Heart right ventricle (tissue), 16 donors: ENCODE measurements at regions of chr11 and their contacts with region 1.

Region 1: GRCh38 chr11:114059278-114059983 is at the start of gene ZBTB16:
- DNase-seq: peak; percentile 88 to 90
- ATAC-seq: peak; percentile 71 to 89 (median 78)
- H3K4me3 ChIP-seq: peak within 1 kb of the TSS; percentile 77 to 98 (median 94)
- H3K27ac ChIP-seq: peak within 1 kb of the TSS; percentile 92 to 100 (median 97)
- H3K4me1 ChIP-seq: peaks cover 14 to 60% (median 54%) of the 10 kb centered on the region in 9 donors
- H3K27me3 ChIP-seq: peaks cover 0 to 20% (median 0%) of the 10 kb centered on the region in 7 donors
- CTCF ChIP-seq: peak in 7 of 9 donors; percentile 30 to 70 (median 40)
- total RNA-seq, gene ZBTB16: 18.3 to 108 (median 72.9) TPM

Region 2: DNA sequence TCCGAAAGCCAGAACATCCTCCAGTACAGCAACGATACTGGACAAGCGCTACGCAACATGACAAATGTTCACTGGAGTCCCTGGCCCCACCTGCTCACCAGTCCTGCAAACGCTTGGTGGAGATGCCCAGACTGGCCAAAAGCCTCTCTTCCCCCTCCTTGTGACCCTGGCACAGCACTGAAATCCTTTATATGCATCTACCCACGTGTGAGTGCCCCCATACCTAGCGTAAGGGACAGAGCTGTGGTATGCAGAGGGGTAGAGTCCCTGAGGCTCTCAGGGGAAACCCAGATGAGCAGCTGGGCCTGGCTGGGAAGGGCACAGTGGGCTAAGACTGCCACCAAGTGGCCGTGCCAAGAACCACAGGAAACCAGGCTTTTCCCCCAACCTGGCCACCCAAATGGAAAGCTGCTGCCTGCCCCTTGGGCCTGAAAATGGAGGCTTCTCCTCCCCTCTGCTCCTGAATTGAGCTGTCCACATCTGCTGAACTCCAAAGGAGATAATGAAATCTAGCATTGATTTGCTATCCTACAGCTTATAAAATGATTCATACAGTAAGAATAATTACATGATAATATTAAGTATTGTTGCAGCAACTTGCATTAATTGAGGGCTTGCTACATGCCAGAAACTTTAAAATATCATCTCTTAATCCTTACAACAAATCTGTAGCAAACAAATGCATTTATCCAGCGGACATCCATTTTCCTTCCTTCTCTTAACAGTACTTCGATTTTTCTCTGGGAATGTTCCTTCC is 769.8 kb before region 1 on chr11:
- intact Hi-C with region 1: no loop called
- DNase-seq: peak; percentile 33 to 67
- ATAC-seq: peak; percentile 58 to 82 (median 74)
- H3K4me3 ChIP-seq: no peak overlapping the region
- H3K27ac ChIP-seq: no peak overlapping the region
- H3K4me1 ChIP-seq: peaks cover 0 to 19% (median 0%) of the 10 kb centered on the region in 9 donors
- H3K27me3 ChIP-seq: peaks cover 0 to 16% (median 0%) of the 10 kb centered on the region in 7 donors
- CTCF ChIP-seq: peak; percentile 80 to 95 (median 89)

Region 3: DNA sequence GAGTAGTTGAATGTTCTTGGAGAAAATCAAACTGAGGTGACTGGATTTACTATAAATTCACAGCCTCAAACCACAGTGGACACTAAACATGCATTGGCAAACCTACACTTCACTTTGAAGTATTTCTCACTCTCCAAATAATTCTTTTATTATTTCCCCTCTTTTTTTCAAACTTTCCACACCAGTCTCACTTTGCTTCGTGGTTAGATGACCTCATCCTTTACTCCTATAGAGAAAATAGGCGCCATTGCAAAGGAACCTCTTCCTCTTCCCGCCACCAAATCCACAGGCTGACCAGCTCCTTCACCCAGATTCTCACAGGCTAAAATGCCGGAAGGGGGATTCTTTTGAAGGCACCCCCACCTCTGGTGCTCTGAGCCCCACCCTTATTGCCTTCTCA is 51.1 kb before region 1 on chr11:
- intact Hi-C with region 1: no loop called
- DNase-seq: no peak
- ATAC-seq: no peak
- H3K4me3 ChIP-seq: no peak overlapping the region
- H3K27ac ChIP-seq: no peak overlapping the region
- H3K4me1 ChIP-seq: no peaks in the 10 kb centered on the region
- H3K27me3 ChIP-seq: peaks cover 0 to 9% (median 0%) of the 10 kb centered on the region in 7 donors
- CTCF ChIP-seq: no peak

Region 4: DNA sequence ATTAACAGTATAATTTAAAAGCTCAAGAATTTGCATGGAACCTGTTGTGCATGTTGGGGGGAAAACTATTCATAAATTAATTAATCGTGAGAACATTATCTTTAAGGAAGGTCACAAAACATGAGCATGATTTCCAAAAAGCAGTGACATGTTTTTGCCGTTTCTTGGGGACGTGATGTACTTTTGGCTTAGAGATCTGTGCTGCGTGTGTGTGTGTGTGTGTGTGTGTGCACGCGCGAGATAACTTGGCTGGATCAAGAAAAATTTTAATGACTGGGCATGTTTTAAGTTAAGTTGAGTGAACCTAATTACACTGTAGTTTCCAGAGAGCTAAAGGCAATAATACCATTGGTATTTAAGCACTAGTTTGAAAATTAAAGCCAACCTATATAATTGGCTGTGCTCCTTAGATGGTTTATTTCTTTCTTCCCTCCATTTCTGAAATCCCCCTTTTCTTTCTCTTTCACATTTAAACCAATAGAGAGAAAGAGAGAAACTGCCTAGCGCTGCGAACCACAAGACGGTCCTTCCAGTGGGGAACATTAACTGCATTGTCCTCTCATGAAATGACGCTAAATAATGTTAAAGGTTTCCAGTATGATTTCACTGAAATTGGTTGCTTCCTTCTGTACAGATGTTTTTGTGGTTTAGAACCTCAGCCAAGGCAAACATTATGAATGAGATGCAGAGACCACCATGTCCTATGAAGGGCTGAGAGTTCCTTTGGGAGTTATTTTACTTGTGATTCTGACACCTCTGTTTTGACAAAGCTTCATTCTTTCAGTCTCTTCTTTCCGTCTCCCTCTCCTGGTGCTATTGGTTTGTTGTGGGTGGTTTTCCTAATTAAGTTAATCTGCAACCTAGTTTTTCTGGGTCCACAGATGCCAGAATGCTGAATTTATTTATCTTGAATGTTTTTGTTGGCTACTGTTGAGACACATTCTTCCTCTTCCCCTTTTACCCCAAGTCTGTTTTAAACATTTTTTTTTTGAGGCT is 51.8 kb after region 1 on chr11:
- intact Hi-C with region 1: loop called in 2 of 10 experiments (anchors 2 to 5 kb)
- DNase-seq: peak; percentile 40 to 58
- ATAC-seq: peak in 7 of 8 donors; percentile 35 to 72 (median 57)
- H3K4me3 ChIP-seq: peak overlapping the region in 8 of 10 donors; percentile 3 to 40 (median 32)
- H3K27ac ChIP-seq: peak overlapping the region; percentile 50 to 85 (median 75)
- H3K4me1 ChIP-seq: peaks cover 34 to 97% (median 85%) of the 10 kb centered on the region in 9 donors
- H3K27me3 ChIP-seq: no peaks in the 10 kb centered on the region
- CTCF ChIP-seq: peak in 2 of 9 donors; percentile 17 to 19

Region 5: DNA sequence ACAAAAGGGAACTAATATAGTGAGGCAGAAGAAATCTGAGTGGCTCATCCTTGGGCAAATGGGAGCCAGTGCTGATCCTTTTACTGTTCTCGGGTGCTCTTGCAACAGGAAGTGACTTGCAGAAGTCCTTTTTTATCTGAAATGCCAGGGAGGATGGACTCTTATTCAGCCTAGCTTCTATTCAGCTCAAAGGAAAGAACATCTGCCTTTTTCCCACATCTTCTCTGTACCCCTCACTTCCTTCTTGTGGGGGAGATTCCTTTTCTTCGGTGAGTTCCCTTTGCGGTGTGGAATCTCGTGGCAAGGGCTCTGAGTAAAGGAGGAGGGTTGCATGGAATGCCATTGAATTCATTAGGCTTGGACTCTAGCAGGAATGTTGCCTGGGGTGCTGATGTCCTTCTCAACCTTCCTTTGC is 76.3 kb after region 1 on chr11:
- intact Hi-C with region 1: loop called in 1 of 10 experiments (anchors 10 kb)
- DNase-seq: no peak
- ATAC-seq: peak in 3 of 8 donors; percentile 2 to 21 (median 18)
- H3K4me3 ChIP-seq: no peak overlapping the region
- H3K27ac ChIP-seq: peak overlapping the region in 8 of 10 donors; percentile 54 to 82 (median 72)
- H3K4me1 ChIP-seq: peaks cover 64 to 100% (median 99%) of the 10 kb centered on the region in 9 donors
- H3K27me3 ChIP-seq: no peaks in the 10 kb centered on the region
- CTCF ChIP-seq: no peak

Region 6: GRCh38 chr11:114166897-114167323 is 107.5 kb after region 1 on chr11:
- intact Hi-C with region 1: loop called in 7 of 10 experiments (anchors 2 to 10 kb)
- DNase-seq: no peak
- ATAC-seq: peak in 4 of 8 donors; percentile 6 to 28 (median 15)
- H3K4me3 ChIP-seq: peak overlapping the region in 5 of 10 donors; percentile 1 to 7 (median 4)
- H3K27ac ChIP-seq: peak overlapping the region; percentile 74 to 100 (median 97)
- H3K4me1 ChIP-seq: peaks cover 82 to 99% (median 95%) of the 10 kb centered on the region in 9 donors
- H3K27me3 ChIP-seq: no peaks in the 10 kb centered on the region
- CTCF ChIP-seq: no peak

Region 7: GRCh38 chr11:114197799-114198500 is 138.5 kb after region 1 on chr11:
- intact Hi-C with region 1: loop called in 1 of 10 experiments (anchors 5 kb)
- DNase-seq: peak; percentile 70 to 80
- ATAC-seq: peak; percentile 81 to 92 (median 86)
- H3K4me3 ChIP-seq: peak overlapping the region in 2 of 10 donors; percentile 5 to 23
- H3K27ac ChIP-seq: peak overlapping the region; percentile 83 to 96 (median 88)
- H3K4me1 ChIP-seq: peaks cover 57 to 100% (median 96%) of the 10 kb centered on the region in 9 donors
- H3K27me3 ChIP-seq: no peaks in the 10 kb centered on the region
- CTCF ChIP-seq: no peak

Region 8: GRCh38 chr11:114262681-114263512 is 203.5 kb after region 1 on chr11:
- intact Hi-C with region 1: loop called in 7 of 10 experiments (anchors 1 to 10 kb)
- DNase-seq: peak in 1 of 2 donors; percentile 43
- ATAC-seq: peak; percentile 26 to 57 (median 50)
- H3K4me3 ChIP-seq: no peak overlapping the region
- H3K27ac ChIP-seq: peak overlapping the region in 1 of 10 donors; percentile 28
- H3K4me1 ChIP-seq: peaks cover 19 to 48% (median 39%) of the 10 kb centered on the region in 9 donors
- H3K27me3 ChIP-seq: no peaks in the 10 kb centered on the region
- CTCF ChIP-seq: peak; percentile 38 to 81 (median 70)